IMR-90 (cell line): ENCODE measurements at regions of chr10 and their contacts with region 1.

Region 1: DNA sequence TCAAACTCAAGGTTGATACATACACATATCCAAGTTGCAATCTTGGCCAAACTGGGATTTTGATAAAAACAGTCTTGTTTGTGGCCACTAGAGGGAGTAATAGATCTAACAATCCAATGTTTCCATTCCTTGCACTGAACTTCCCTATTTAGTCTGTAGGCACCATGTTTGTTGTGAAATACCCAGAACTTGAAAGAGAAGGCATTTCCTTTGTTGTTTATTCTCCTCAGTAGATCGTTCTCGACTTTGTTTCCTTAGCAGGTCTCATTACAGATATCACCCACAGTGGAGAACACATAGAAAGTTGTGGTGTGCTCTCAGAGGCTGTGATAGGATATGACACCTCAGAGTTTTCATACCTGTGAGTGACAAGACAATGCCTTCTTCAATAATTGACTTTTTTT is 70.3 kb upstream of the MXI1 start:
- DNase-seq: peak; percentile 78
- ATAC-seq: peak; percentile 82
- H3K4me3 ChIP-seq: no peak overlapping the region
- H3K27ac ChIP-seq: no peak overlapping the region
- H3K4me1 ChIP-seq: 0 out of 2 replicates have a peak, but pooled peaks cover 2% of the 10 kb centered on the region
- H3K27me3 ChIP-seq: no peaks in the 10 kb centered on the region
- CTCF ChIP-seq: peak; percentile 89
- POLR2A ChIP-seq: no peak
- RAD21 ChIP-seq: peak; percentile 88

Region 2: GRCh38 chr10:110007701-110008517 is 129.2 kb before region 1 on chr10 and contains the start of gene ADD3:
- CTCF ChIA-PET with region 1: no interaction called
- POLR2A ChIA-PET with region 1: no interaction called
- dilution Hi-C with region 1: no loop called
- in situ Hi-C with region 1: no loop called
- intact Hi-C with region 1: loop called (anchors 5 kb)
- DNase-seq: peak; percentile 91
- ATAC-seq: peak; percentile 92
- H3K4me3 ChIP-seq: peak within 1 kb of the TSS; percentile 82
- H3K27ac ChIP-seq: peak within 1 kb of the TSS; percentile 86
- H3K4me1 ChIP-seq: peaks cover 4% of the 10 kb centered on the region; the same call in 1 of the 2 replicates
- H3K27me3 ChIP-seq: no peaks in the 10 kb centered on the region
- CTCF ChIP-seq: no peak
- POLR2A ChIP-seq: peak; percentile 58; the same call in 1 of the 2 replicates
- RAD21 ChIP-seq: no peak
- total RNA-seq, gene ADD3: 137 and 212 TPM in 2 replicates

Region 3: DNA sequence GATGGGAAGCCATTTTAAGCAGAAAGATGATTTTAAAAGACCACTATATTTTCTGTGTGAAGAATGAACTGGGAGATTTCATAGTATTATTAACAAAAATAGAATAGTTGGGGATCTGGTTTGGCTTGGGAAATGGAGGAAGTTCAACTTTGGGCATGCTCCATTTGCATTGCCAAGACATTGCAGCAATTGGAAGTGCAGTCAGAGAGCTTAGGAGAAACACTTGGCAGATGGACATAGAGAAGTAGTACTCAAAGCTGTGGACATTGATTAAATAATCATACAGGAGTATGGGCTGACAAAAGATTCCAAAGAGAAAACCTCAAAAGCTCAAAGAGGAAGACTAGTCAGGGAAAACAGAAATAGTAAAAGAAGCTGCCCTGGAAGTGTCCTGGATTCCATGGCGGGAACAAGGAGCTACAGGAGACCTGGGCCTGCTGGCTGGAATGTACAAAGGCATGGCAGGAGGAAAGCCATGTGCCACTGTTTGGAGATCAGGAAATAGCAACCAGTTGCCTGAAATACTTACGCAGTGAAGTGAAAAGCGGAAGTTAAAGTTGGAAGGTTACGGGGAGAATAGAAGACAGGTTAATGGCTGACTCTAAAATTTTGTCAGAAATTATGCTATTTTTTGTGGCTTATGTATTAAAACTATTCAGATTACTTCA is 23.3 kb before region 1 on chr10:
- CTCF ChIA-PET with region 1: no interaction called
- POLR2A ChIA-PET with region 1: no interaction called
- dilution Hi-C with region 1: no loop called
- in situ Hi-C with region 1: no loop called
- intact Hi-C with region 1: no loop called
- DNase-seq: no peak
- ATAC-seq: no peak
- H3K4me3 ChIP-seq: no peak overlapping the region
- H3K27ac ChIP-seq: no peak overlapping the region
- H3K4me1 ChIP-seq: no peaks in the 10 kb centered on the region
- H3K27me3 ChIP-seq: no peaks in the 10 kb centered on the region
- CTCF ChIP-seq: no peak
- POLR2A ChIP-seq: no peak
- RAD21 ChIP-seq: no peak

Region 4: DNA sequence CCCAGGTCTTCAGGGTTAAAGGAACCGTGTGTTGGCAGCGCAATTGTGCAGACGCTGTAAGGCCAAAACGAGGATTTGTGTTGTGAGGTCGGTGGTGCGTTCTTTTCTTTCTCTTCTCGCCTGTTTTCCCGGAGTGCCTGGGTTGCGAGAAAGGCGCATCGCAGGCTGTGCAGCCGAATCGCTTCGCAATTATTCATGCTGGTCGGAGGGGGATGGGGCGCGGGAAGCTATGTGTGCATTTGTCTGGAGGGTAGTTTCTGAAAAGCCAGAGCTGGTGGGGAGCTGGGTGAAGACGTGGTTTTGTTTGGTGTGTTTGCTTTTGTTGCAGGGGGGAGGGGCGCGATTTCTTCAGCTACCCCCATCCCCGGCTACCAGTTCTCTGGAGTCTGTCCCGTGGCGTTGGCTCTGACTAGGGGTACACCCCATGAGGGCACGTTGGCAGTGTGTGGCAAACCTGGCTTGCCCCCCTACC is 72.3 kb after region 1 on chr10:
- CTCF ChIA-PET with region 1: interaction called, 4 read pairs
- POLR2A ChIA-PET with region 1: no interaction called
- dilution Hi-C with region 1: no loop called
- in situ Hi-C with region 1: no loop called
- intact Hi-C with region 1: loop called (anchors 2 kb)
- DNase-seq: peak; percentile 65
- ATAC-seq: peak; percentile 11
- H3K4me3 ChIP-seq: peak overlapping the region; percentile 54
- H3K27ac ChIP-seq: peak overlapping the region; percentile 65
- H3K4me1 ChIP-seq: peaks cover 6% of the 10 kb centered on the region; the same call in 1 of the 2 replicates
- H3K27me3 ChIP-seq: no peaks in the 10 kb centered on the region
- CTCF ChIP-seq: no peak
- POLR2A ChIP-seq: no peak; the same call in 1 of the 2 replicates
- RAD21 ChIP-seq: no peak

Region 5: GRCh38 chr10:110225756-110226542 is 88.8 kb after region 1 on chr10:
- CTCF ChIA-PET with region 1: interaction called, 6 read pairs
- POLR2A ChIA-PET with region 1: no interaction called
- dilution Hi-C with region 1: no loop called
- in situ Hi-C with region 1: loop called (anchors 5 kb)
- intact Hi-C with region 1: loop called (anchors 1 kb)
- DNase-seq: peak; percentile 93
- ATAC-seq: peak; percentile 81
- H3K4me3 ChIP-seq: peak overlapping the region; percentile 90
- H3K27ac ChIP-seq: peak overlapping the region; percentile 96
- H3K4me1 ChIP-seq: peaks cover 6% of the 10 kb centered on the region
- H3K27me3 ChIP-seq: no peaks in the 10 kb centered on the region
- CTCF ChIP-seq: peak; percentile 72
- POLR2A ChIP-seq: no peak
- RAD21 ChIP-seq: peak; percentile 64

Region 6: DNA sequence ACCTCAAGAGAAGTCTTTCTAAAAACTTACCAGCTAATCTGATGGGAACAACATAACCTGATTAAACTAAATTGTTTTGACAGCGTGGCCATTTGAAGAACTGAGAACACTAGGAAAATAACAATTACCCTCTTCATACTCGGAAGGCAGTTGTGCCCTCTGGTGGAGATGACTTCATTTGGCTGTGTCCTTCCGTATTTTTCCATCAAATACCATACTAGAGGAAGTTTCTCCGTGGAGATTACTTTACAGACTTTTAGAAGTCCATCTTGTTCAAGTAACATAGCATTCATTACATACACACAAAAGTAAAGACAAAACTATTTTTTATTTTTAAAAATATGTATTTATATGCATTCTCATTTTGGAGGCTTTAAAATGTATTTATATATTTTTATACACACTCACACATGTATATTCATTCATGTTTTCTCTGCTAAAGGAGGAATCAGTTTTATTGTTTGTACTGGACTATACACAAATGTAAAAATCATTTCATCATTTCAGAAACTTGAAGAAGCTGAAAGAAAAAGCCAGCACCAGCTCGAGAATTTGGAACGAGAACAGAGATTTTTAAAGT is 142.4 kb after region 1 on chr10:
- CTCF ChIA-PET with region 1: interaction called, 14 read pairs
- POLR2A ChIA-PET with region 1: no interaction called
- dilution Hi-C with region 1: loop called (anchors 25 kb)
- in situ Hi-C with region 1: loop called (anchors 5 kb)
- intact Hi-C with region 1: loop called (anchors 1 kb)
- DNase-seq: peak; percentile 71
- ATAC-seq: peak; percentile 94
- H3K4me3 ChIP-seq: no peak overlapping the region
- H3K27ac ChIP-seq: no peak overlapping the region
- H3K4me1 ChIP-seq: peaks cover 1% of the 10 kb centered on the region; the same call in 1 of the 2 replicates
- H3K27me3 ChIP-seq: no peaks in the 10 kb centered on the region
- CTCF ChIP-seq: peak; percentile 84
- POLR2A ChIP-seq: no peak
- RAD21 ChIP-seq: peak; percentile 92

Region 7: GRCh38 chr10:110285501-110285900 is 148.4 kb after region 1 on chr10:
- CTCF ChIA-PET with region 1: no interaction called
- POLR2A ChIA-PET with region 1: no interaction called
- dilution Hi-C with region 1: loop called (anchors 25 kb)
- in situ Hi-C with region 1: loop called (anchors 5 kb)
- intact Hi-C with region 1: no loop called
- DNase-seq: no peak
- ATAC-seq: no peak
- H3K4me3 ChIP-seq: no peak overlapping the region
- H3K27ac ChIP-seq: no peak overlapping the region
- H3K4me1 ChIP-seq: no peaks in the 10 kb centered on the region
- H3K27me3 ChIP-seq: no peaks in the 10 kb centered on the region
- CTCF ChIP-seq: no peak
- POLR2A ChIP-seq: no peak
- RAD21 ChIP-seq: no peak

Region 8: DNA sequence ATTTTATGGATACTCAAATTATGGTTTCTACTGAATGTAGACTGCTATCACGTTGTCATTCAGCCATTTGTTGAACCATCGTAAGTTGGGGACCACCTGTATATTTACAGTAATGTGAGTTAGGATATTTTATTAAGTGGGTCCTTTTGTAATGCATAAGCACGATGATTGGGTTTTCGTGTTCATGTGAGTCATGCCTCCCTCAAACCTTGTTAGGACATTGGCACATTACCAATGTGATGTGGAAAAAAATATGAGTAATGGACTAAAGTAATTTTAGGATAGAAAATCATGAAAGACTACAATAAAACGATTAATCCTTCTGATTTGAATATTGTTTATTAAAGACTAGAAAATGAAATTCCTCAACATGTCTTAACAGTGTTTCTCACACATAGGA is 439.1 kb after region 1 on chr10:
- CTCF ChIA-PET with region 1: no interaction called
- POLR2A ChIA-PET with region 1: no interaction called
- dilution Hi-C with region 1: no loop called
- in situ Hi-C with region 1: no loop called
- intact Hi-C with region 1: loop called (anchors 10 kb)
- DNase-seq: peak; percentile 85
- ATAC-seq: peak; percentile 47
- H3K4me3 ChIP-seq: no peak overlapping the region
- H3K27ac ChIP-seq: no peak overlapping the region
- H3K4me1 ChIP-seq: peaks cover 2% of the 10 kb centered on the region; the same call in 1 of the 2 replicates
- H3K27me3 ChIP-seq: no peaks in the 10 kb centered on the region
- CTCF ChIP-seq: no peak
- POLR2A ChIP-seq: no peak
- RAD21 ChIP-seq: no peak